Activated T-helper 1 cell treated with anti-CD3 and anti-CD28 coated beads, Interleukin-12 subunit alpha, Interleukin-12 subunit beta, Interleukin-2, Interleukin-4 antibody, amounts not matched to agents 30 ng/mL and 10 ng/mL and 1 ng/mL, durations not matched to agents 14 hours and 24 hours and 36 hours (primary cell): ENCODE measurements at regions of chr10 and their contacts with region 1.

Region 1: DNA sequence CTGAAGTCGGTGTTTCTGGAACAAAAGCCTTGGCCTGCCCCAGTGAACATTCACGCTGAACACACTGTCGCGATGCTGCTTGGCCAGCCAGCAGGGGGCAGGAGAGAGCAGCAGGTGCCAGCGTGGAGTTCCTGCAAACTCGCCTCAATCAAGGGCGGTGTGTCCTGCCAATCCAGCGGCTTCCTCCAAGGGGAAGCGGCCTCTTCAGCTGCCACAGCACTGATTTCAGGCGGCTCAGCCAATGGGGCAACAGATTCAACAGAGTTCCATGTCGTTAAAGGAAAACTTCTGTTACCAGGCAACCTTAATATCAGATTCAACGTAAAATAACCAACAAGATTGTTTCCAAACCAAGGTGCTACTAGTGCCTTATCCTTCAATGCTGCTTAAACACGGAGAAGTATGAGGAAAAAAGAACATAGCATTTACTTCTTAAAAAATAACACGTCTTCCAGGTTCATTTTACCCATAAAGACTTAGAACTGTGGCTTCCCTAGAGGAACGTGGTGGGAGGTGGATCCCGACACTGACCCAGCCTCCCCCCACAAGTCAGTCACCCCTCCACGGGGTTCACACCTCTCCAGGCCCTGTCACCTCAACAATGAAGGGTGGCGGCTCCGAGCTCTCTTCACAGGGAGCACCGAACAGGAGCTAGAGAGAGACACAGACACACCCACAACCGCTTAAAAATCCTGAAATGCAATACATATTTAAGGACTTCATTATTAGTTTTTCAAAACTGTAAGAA is 178.2 kb downstream of the DIP2C start:
- DNase-seq: peak; percentile 60
- H3K4me3 Mint-ChIP-seq: no peak overlapping the region
- H3K27ac Mint-ChIP-seq: no peak overlapping the region
- H3K4me1 Mint-ChIP-seq: peaks cover 18% of the 10 kb centered on the region
- H3K27me3 Mint-ChIP-seq: peaks cover 8% of the 10 kb centered on the region

Region 2: GRCh38 chr10:451021-451471 is 60.2 kb before region 1 on chr10:
- intact Hi-C with region 1: no loop called
- DNase-seq: peak; percentile 51
- H3K4me3 Mint-ChIP-seq: peak overlapping the region; percentile 65
- H3K27ac Mint-ChIP-seq: peak overlapping the region; percentile 26
- H3K4me1 Mint-ChIP-seq: peaks cover 22% of the 10 kb centered on the region
- H3K27me3 Mint-ChIP-seq: peaks cover 13% of the 10 kb centered on the region

Region 3: GRCh38 chr10:784403-785088 is 273.3 kb after region 1 on chr10:
- intact Hi-C with region 1: loop called (anchors 10 kb)
- DNase-seq: no peak
- H3K4me3 Mint-ChIP-seq: no peak overlapping the region
- H3K27ac Mint-ChIP-seq: no peak overlapping the region
- H3K4me1 Mint-ChIP-seq: no peaks in the 10 kb centered on the region
- H3K27me3 Mint-ChIP-seq: peaks cover 3% of the 10 kb centered on the region

Region 4: GRCh38 chr10:1074748-1075308 is 563.6 kb after region 1 on chr10:
- intact Hi-C with region 1: loop called (anchors 2 kb)
- DNase-seq: no peak
- H3K4me3 Mint-ChIP-seq: no peak overlapping the region
- H3K27ac Mint-ChIP-seq: peak overlapping the region; percentile 15
- H3K4me1 Mint-ChIP-seq: peaks cover 11% of the 10 kb centered on the region
- H3K27me3 Mint-ChIP-seq: no peaks in the 10 kb centered on the region